ENCODE measurements at regions of chr3 and their contacts with region 1.

Region 1: DNA sequence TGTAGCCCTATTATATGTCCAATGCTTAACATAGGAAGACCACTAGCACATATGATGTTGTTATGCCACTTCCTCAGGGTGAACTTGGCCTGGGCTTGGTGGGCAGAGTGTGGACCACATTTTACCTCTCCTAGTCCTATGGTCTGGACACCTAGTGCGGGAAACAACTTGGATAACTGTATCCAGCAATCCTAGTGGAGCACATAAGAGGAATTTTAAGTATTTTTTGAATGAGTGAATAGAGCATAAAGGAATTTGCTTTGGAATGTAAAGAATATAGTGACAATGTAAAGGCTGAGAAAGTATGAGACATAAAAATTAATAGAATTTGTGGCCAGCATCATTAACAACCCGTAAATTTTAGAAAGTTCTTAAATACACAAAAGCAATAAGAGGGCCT is 528.9 kb downstream of the IGSF11 start:
- DNase-seq: no peak
- H3K4me3 ChIP-seq: no peak overlapping the region
- CTCF ChIP-seq: no peak
- POLR2A ChIP-seq: no peak

Region 2: DNA sequence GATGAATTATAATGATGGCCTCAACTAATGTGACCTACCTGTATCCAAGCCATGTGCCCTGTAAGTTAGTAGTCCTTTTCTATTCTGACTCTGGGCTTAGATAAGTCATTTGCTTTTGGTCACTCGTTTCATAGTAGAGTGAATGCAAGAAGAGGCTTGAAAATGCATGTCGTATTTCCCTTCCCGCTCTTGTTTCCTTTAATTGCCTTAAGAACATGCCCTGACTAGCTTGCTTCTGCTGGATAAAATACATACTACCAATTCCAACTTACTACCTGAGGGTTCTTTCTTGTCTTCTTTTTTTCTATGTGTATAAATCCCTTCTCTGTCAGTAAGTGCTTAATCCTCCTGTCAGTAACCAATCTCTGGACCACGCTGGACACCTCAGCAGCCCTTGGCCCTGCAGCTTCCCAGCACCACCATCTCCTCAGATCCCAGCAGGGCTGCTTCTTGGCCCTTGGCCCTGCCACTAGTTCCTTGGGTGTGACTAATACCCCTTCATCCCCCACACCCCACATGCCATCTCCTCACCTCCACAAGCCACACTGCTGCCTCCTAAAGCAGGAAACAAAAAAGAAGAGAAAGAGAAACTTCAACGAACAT is 242.9 kb before region 1 on chr3:
- intact Hi-C with region 1: no loop called
- DNase-seq: no peak
- H3K4me3 ChIP-seq: no peak overlapping the region
- CTCF ChIP-seq: no peak
- POLR2A ChIP-seq: no peak

Region 3: GRCh38 chr3:118472588-118472987 is 33.2 kb before region 1 on chr3:
- intact Hi-C with region 1: loop called (anchors 1 kb)
- DNase-seq: no peak
- H3K4me3 ChIP-seq: no peak overlapping the region
- CTCF ChIP-seq: no peak
- POLR2A ChIP-seq: no peak